ENCODE measurements at regions of chr1 and their contacts with region 1.

Region 1: DNA sequence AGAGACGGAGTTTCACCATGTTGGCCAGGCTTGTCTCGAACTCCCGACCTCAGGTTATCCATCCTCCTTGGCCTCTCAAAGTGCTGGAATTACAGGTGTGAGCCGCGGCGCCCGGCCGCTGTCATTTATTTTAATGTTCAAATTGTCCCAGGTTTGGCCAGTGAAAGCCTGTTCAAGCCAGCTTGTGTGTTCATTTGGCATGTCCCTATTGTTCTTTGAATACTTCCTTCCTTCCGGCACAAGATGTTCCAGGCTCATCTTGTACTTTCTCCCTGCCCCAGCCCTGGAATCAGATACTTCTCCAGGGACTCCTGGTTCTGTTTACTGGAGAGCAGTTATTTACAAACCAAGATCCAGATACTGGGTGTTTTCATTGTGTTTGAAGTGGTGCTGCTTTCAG is 37.0 kb downstream of the ZBTB8B start:
- DNase-seq: no peak
- H3K4me3 ChIP-seq: no peak overlapping the region
- H3K27ac ChIP-seq: no peak overlapping the region
- H3K4me1 ChIP-seq: no peaks in the 10 kb centered on the region
- H3K27me3 ChIP-seq: no peaks in the 10 kb centered on the region
- CTCF ChIP-seq: no peak

Region 2: DNA sequence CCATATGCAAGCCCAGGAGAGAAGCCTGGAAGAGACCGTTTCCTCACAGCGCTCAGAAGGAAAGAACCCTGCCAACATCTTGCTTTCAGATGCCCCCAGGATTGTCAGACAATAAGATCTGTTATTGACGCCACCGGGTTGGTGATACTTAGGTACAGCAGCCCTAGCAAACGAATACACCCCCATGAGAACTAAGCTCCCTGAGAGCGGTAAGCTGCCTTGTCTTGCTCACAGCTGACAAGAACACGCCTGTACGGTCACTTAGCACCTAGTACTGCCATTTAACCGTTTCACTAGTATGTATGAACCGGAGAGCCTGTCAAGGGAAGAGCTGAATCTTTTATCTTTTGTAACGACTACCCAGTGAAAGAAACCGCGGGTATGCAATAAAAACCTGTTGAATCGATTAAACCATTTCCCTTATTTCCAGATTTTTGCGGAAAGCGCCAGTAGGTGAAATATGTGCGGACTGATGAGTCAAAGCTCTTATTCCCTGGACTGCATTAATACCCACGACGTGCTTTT is 37.6 kb before region 1 on chr1:
- CTCF ChIA-PET with region 1: no interaction called
- POLR2A ChIA-PET with region 1: no interaction called
- intact Hi-C with region 1: no loop called
- DNase-seq: peak; percentile 21
- H3K4me3 ChIP-seq: peak overlapping the region; percentile 51
- H3K27ac ChIP-seq: no peak overlapping the region
- H3K4me1 ChIP-seq: peaks cover 4% of the 10 kb centered on the region
- H3K27me3 ChIP-seq: peaks cover 54% of the 10 kb centered on the region
- CTCF ChIP-seq: no peak

Region 3: DNA sequence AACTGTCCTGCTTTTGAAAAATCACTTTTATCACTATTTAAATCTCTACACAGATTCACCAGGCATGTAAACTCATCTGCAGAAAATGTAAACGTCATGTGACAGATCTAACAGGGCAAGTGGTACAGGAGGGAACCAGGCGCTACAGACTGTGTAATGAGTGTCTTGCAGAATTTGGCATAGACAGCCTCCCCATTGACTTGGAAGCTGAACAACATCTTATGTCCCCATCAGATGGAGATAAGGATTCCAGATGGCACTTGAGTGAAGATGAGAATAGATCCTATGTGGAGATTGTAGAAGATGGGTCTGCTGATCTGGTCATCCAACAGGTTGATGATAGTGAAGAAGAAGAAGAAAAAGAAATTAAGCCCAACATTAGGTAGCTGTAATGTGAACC is 98.2 kb after region 1 on chr1:
- CTCF ChIA-PET with region 1: no interaction called
- POLR2A ChIA-PET with region 1: no interaction called
- intact Hi-C with region 1: no loop called
- DNase-seq: no peak
- H3K4me3 ChIP-seq: no peak overlapping the region
- H3K27ac ChIP-seq: no peak overlapping the region
- H3K4me1 ChIP-seq: no peaks in the 10 kb centered on the region
- H3K27me3 ChIP-seq: no peaks in the 10 kb centered on the region
- CTCF ChIP-seq: no peak

Region 4: DNA sequence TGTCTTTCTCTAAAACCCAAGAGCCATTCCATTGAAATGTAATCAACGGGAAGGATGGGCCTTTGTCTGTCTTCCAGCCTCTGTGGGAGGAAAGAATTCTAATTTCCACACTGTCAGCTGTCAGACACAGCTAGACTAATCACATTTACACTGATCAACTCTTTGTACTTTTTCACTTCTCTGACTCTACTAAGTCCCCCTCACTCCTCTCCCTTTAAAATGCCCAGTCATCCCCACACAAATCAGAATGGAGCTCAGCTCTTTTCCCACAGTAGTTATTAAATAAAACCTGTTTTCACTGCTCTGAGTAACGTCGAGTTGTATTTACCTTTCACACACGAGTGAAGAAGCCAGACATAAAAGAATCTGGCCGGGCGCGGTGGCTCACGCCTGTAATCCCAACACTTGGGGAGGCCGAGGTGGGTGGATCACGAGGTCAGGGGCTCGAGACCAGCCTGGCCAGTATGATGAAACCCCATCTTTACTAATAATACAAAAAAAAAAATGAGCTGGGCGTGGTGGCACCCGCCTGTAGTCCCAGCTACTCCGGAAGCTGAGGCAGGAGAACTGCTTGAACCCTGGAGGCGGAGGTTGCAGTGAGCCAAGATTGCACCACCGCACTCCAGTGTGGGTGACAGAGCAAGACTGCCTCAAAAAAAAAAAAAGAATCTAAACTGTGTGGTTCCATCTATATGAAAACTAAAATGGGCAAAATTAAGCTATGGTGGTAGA is 135.2 kb after region 1 on chr1:
- CTCF ChIA-PET with region 1: interaction called, 14 read pairs
- POLR2A ChIA-PET with region 1: no interaction called
- intact Hi-C with region 1: no loop called
- DNase-seq: peak; percentile 21
- H3K4me3 ChIP-seq: no peak overlapping the region
- H3K27ac ChIP-seq: no peak overlapping the region
- H3K4me1 ChIP-seq: no peaks in the 10 kb centered on the region
- H3K27me3 ChIP-seq: no peaks in the 10 kb centered on the region
- CTCF ChIP-seq: no peak